HepG2 (cell line): ENCODE measurements at regions of chr12 and their contacts with region 1.

Region 1: DNA sequence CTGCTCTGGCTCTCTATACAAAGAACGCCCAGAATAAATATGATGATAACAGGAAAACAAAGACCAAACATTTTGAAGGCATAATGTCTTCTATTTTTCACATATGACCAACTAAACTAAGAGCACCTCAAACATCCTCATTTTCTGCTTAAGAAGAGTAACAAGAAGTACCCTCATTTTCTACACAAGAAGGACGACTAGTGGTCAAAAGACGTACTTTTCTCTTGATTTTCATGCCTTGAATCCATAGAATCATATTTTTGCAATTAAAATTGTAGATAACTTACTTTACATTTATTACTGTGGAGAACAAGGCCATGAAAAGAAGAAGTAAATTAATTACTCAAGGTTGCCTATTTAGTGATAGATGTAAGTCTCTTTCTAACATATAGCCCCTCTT is 358.6 kb downstream of the DUSP6 start:
- DNase-seq: peak; percentile 36
- ATAC-seq: no peak
- H3K4me3 ChIP-seq: no peak overlapping the region
- H3K27ac ChIP-seq: no peak overlapping the region
- H3K4me1 ChIP-seq: no peaks in the 10 kb centered on the region
- H3K27me3 ChIP-seq: no peaks in the 10 kb centered on the region; a peak in 1 of 5 replicates
- CTCF ChIP-seq: peak; percentile 55
- EP300 ChIP-seq: no peak
- POLR2A ChIP-seq: no peak
- RAD21 ChIP-seq: no peak

Region 2: DNA sequence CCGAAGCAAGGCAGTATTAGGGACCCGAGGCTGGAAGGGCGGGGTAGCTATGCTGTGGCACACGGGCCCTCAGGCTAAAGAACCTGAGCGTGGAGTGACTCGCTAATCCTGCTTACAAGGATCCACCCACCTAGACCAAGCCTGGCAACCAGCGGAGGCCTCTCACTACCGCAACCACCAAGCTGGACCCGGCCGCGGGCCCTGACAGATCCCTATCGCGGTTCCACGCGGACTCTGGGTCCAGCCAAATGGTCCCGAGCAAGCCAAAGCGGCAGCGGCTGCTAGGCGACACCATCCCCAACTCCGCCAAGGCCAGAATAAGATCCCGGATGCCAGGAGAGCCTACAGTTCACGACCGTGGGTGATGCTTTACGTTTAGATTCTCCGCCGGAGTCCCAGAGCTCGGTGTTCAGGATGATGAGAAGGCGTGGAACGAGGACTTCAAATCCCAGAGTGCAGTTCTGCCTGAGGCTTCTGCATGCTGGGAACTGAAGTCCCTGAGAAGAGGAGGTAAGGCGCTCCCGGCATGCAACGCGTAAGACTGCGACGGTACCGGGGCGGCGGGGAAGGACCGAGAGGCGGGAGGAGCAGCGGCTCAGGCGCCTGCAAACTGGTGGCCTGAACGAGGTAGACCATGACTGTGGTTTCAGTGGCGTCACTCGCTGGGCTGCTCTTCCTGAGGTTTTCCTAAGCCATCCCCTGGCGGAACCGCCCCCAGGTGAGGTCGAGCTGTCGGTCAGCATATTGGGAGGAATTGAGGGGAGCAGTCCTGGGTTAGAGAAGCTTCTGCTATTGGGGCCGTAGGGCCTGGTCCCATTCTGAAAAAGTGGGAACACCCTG is 851.7 kb before region 1 on chr12 and contains the starts of genes CEP290 and TMTC3:
- CTCF ChIA-PET with region 1: no interaction called
- POLR2A ChIA-PET with region 1: no interaction called
- in situ Hi-C with region 1: loop called (anchors 25 kb)
- intact Hi-C with region 1: no loop called
- DNase-seq: peak; percentile 99
- ATAC-seq: peak; percentile 97
- H3K4me3 ChIP-seq: peak within 1 kb of the TSS; percentile 73 to 86 (median 75)
- H3K27ac ChIP-seq: peak within 1 kb of the TSS; percentile 68
- H3K4me1 ChIP-seq: peaks cover 34% of the 10 kb centered on the region
- H3K27me3 ChIP-seq: no peaks in the 10 kb centered on the region; a peak in 1 of 5 replicates
- CTCF ChIP-seq: no peak
- EP300 ChIP-seq: 0 out of 4 replicates have a peak, but pooled peaks of 1 of the 2 experiments have one; percentile 12
- POLR2A ChIP-seq: peak; percentile 47 to 62; a peak in 3 of 4 replicates
- RAD21 ChIP-seq: no peak
- total RNA-seq, gene CEP290: 10.8 and 13.2 TPM in 2 replicates
- total RNA-seq, gene TMTC3: 18.6 and 22.5 TPM in 2 replicates

Region 3: GRCh38 chr12:88580051-88580871 is 413.4 kb before region 1 on chr12 and contains the start of gene KITLG:
- CTCF ChIA-PET with region 1: no interaction called
- POLR2A ChIA-PET with region 1: no interaction called
- in situ Hi-C with region 1: no loop called
- intact Hi-C with region 1: loop called (anchors 2 kb)
- DNase-seq: peak; percentile 56
- ATAC-seq: peak; percentile 96
- H3K4me3 ChIP-seq: peak within 1 kb of the TSS; percentile 68 to 74 (median 72)
- H3K27ac ChIP-seq: no peak within 1 kb of the TSS
- H3K4me1 ChIP-seq: peaks cover 23% of the 10 kb centered on the region
- H3K27me3 ChIP-seq: no peaks in the 10 kb centered on the region
- CTCF ChIP-seq: peak; percentile 59
- EP300 ChIP-seq: no peak
- POLR2A ChIP-seq: peak; percentile 26 to 79; a peak in 2 of 4 replicates
- RAD21 ChIP-seq: peak; percentile 23; the same call in 1 of the 2 replicates
- total RNA-seq, gene KITLG: 4.3 and 5.3 TPM in 2 replicates

Region 4: DNA sequence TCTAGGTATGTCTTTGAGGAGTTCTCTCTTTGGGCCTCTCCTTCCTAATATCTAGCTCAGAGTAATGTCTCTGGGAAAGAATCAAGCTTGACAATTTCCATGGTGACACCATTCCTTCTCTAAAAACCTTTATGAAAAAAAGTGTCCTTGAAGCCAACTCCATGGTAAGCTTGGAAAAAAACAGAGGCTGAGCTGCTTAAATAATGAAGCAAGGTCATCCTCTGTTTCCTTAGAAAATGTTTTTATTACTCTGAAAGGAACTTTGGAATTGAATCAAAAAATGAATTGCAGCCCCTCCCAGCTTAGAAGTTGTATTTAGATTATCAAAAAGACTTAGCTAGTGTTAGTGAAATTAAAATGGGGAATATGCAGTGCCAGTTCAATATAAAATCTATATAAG is 247.3 kb before region 1 on chr12:
- CTCF ChIA-PET with region 1: no interaction called
- POLR2A ChIA-PET with region 1: no interaction called
- in situ Hi-C with region 1: no loop called
- intact Hi-C with region 1: loop called (anchors 5 kb)
- DNase-seq: no peak
- ATAC-seq: no peak
- H3K4me3 ChIP-seq: no peak overlapping the region
- H3K27ac ChIP-seq: no peak overlapping the region
- H3K4me1 ChIP-seq: peaks cover 16% of the 10 kb centered on the region
- H3K27me3 ChIP-seq: no peaks in the 10 kb centered on the region
- CTCF ChIP-seq: no peak
- EP300 ChIP-seq: no peak
- POLR2A ChIP-seq: no peak
- RAD21 ChIP-seq: no peak

Region 5: GRCh38 chr12:88844423-88844822 is 149.2 kb before region 1 on chr12:
- CTCF ChIA-PET with region 1: no interaction called
- POLR2A ChIA-PET with region 1: no interaction called
- in situ Hi-C with region 1: no loop called
- intact Hi-C with region 1: no loop called
- DNase-seq: no peak
- ATAC-seq: no peak
- H3K4me3 ChIP-seq: no peak overlapping the region
- H3K27ac ChIP-seq: no peak overlapping the region
- H3K4me1 ChIP-seq: no peaks in the 10 kb centered on the region
- H3K27me3 ChIP-seq: no peaks in the 10 kb centered on the region
- CTCF ChIP-seq: no peak
- EP300 ChIP-seq: no peak
- POLR2A ChIP-seq: no peak
- RAD21 ChIP-seq: no peak